ENCODE measurements at regions of chr9 and their contacts with region 1.

Region 1: GRCh38 chr9:88578121-88579054 is 43.4 kb downstream of the NXNL2 start:
- DNase-seq: peak; percentile 44 to 99
- H3K4me3 ChIP-seq: no peak overlapping the region
- H3K27ac ChIP-seq: no peak overlapping the region
- H3K4me1 ChIP-seq: no peaks in the 10 kb centered on the region; a peak in 1 of 7 replicates
- H3K27me3 ChIP-seq: no peaks in the 10 kb centered on the region; a peak in 1 of 7 replicates
- CTCF ChIP-seq: peak; percentile 96 to 98 (median 96)
- EP300 ChIP-seq: no peak
- POLR2A ChIP-seq: no peak
- RAD21 ChIP-seq: peak; percentile 86 to 95

Region 2: GRCh38 chr9:88567870-88568269 is 10.5 kb before region 1 on chr9:
- CTCF ChIA-PET with region 1: interaction called, 11 read pairs
- POLR2A ChIA-PET with region 1: no interaction called
- DNase-seq: no peak
- H3K4me3 ChIP-seq: no peak overlapping the region
- H3K27ac ChIP-seq: no peak overlapping the region
- H3K4me1 ChIP-seq: no peaks in the 10 kb centered on the region
- H3K27me3 ChIP-seq: no peaks in the 10 kb centered on the region
- CTCF ChIP-seq: no peak
- EP300 ChIP-seq: no peak
- POLR2A ChIP-seq: no peak
- RAD21 ChIP-seq: no peak

Region 3: GRCh38 chr9:88590558-88591146 is 12.3 kb after region 1 on chr9:
- CTCF ChIA-PET with region 1: interaction called, 21 read pairs
- POLR2A ChIA-PET with region 1: no interaction called
- DNase-seq: peak; percentile 9 to 80
- H3K4me3 ChIP-seq: no peak overlapping the region
- H3K27ac ChIP-seq: no peak overlapping the region
- H3K4me1 ChIP-seq: 0 out of 7 replicates have a peak, but pooled peaks cover 0 to 2% (median 0%) of the 10 kb centered on the region in 4 experiments
- H3K27me3 ChIP-seq: no peaks in the 10 kb centered on the region; a peak in 1 of 7 replicates
- CTCF ChIP-seq: peak; percentile 62 to 76 (median 71)
- EP300 ChIP-seq: no peak
- POLR2A ChIP-seq: no peak
- RAD21 ChIP-seq: peak; percentile 58 to 67

Region 4: GRCh38 chr9:88614359-88614758 is 36.0 kb after region 1 on chr9:
- CTCF ChIA-PET with region 1: no interaction called
- POLR2A ChIA-PET with region 1: no interaction called
- DNase-seq: no peak
- H3K4me3 ChIP-seq: no peak overlapping the region
- H3K27ac ChIP-seq: no peak overlapping the region
- H3K4me1 ChIP-seq: no peaks in the 10 kb centered on the region
- H3K27me3 ChIP-seq: peaks cover 0 to 1% (median 0%) of the 10 kb centered on the region in 4 experiments; a peak in 1 of 7 replicates
- CTCF ChIP-seq: no peak
- EP300 ChIP-seq: no peak
- POLR2A ChIP-seq: no peak
- RAD21 ChIP-seq: no peak